Psoas muscle (tissue), 8 donors: ENCODE measurements at regions of chr17 and their contacts with region 1.

Region 1: DNA sequence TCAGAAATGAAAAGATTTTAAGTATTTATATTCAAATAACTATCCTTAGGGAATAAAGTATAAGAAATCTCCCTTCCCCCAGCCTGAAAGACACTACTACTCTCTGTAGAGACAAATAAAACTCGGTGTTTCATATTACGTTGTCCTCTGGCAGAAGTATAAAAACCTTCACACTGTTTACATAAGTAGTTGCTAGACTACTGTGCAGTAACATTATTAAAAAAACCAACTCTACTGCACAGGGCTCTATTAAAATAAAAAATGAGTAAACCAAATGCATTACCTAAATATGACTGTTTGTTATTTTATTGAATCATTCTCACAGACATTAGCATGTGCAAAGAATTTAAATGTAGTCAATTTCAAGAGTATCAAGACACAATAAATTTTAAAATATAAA is 67.4 kb downstream of the MED13 start:
- DNase-seq: no peak
- ATAC-seq: peak; percentile 80 to 92 (median 84)
- H3K4me3 ChIP-seq: peak overlapping the region; percentile 32
- H3K27ac ChIP-seq: peak overlapping the region; percentile 64
- H3K4me1 ChIP-seq: peaks cover 31% of the 10 kb centered on the region
- H3K27me3 ChIP-seq: no peaks in the 10 kb centered on the region
- CTCF ChIP-seq: no peak

Region 2: GRCh38 chr17:60947100-60947499 is 1050.6 kb before region 1 on chr17:
- intact Hi-C with region 1: no loop called
- DNase-seq: no peak
- ATAC-seq: no peak
- H3K4me3 ChIP-seq: no peak overlapping the region
- H3K27ac ChIP-seq: no peak overlapping the region
- H3K4me1 ChIP-seq: no peaks in the 10 kb centered on the region
- H3K27me3 ChIP-seq: no peaks in the 10 kb centered on the region
- CTCF ChIP-seq: no peak

Region 3: DNA sequence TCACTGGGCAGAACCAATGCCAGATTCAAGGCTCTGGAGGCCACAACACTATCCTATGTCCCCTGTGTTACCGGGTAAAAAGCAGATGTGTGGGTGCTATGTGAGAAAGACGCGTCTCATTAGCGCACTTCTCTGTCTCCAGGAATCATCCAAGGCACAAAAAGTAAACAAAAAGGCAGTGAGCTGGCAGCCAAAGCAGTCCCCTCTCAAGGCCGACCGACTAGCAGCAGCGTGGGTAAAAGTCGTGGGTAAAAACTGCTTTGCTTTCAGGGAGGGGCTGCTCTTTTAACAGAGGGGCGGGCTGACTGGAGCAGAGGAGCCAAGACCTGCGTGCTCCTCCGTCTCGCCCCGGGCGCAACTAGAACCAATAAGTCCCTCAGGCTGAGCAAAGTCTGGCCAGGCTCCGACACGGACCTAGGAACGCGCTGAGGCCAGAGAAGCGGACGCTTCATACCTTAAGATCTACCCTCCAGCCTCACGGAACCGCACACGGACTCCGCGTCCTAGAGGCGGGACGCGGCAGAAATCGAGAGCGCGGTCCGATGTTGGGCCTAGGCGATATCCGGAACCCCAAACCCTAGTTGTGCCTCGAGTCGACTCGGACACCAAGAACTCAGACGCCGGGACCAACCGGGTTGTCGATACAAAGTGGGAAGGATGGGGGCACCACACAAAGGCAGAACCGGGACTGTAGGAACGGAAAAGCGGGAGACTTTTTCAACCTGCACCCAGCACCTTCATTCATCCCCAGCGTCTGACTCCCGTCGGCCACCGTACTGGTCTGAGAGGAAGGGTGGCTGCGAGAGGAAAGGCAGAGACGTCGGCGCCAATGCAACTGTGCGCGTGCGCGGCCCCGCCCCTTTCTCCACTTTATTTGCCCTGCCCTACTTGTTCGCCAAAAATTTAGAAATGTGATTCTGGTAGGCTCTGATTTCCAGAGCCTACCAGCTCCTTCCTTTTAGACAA is 70.2 kb before region 1 on chr17 and contains the start of gene INTS2:
- intact Hi-C with region 1: no loop called
- DNase-seq: peak; percentile 98
- ATAC-seq: peak; percentile 96 to 98 (median 97)
- H3K4me3 ChIP-seq: peak within 1 kb of the TSS; percentile 89
- H3K27ac ChIP-seq: peak within 1 kb of the TSS; percentile 89
- H3K4me1 ChIP-seq: peaks cover 14% of the 10 kb centered on the region
- H3K27me3 ChIP-seq: no peaks in the 10 kb centered on the region
- CTCF ChIP-seq: no peak
- total RNA-seq, gene INTS2: 6.2 to 8.0 (median 6.9) TPM

Region 4: DNA sequence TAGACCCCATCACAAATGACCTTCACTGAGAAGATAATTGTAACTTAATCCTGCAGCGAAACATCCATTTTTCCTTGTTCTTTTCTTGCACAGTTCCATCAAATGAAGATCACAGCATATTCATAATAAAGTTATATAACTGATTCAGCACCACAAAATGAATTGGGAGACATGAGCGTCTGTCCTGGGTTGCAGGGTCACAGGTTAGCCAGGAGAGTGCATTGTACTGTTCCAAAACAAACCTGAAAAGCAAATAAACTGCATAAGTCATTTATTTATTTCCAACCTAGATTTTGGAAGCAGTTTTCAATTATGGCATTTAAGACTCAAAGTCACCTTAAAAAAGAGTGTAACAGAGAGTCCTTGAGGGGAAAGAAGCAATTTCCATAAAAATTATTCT is 51.3 kb before region 1 on chr17:
- intact Hi-C with region 1: loop called in 1 of 2 experiments (anchors 5 kb)
- DNase-seq: no peak
- ATAC-seq: no peak
- H3K4me3 ChIP-seq: no peak overlapping the region
- H3K27ac ChIP-seq: no peak overlapping the region
- H3K4me1 ChIP-seq: peaks cover 5% of the 10 kb centered on the region
- H3K27me3 ChIP-seq: no peaks in the 10 kb centered on the region
- CTCF ChIP-seq: no peak

Region 5: DNA sequence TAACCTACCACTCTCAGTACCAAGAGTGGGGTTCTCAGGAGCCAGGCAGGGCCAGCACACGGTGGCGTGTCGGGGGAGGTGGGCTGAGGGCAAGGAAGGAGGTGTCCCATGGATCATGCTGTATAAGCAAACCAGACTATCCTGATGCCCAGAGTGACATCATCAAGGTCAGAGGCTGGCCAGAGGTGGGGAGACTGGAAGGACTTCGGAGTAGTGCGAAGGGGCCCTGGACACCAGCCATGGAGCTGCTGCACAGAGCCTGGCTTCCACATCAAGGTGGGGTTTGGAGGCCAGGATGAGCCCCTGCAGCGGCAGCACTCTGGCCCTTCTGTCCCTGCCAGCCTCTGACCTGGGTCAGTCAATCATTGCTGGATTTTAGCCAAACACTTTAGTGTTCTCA is 32.5 kb after region 1 on chr17:
- intact Hi-C with region 1: loop called in 1 of 2 experiments (anchors 5 kb)
- DNase-seq: no peak
- ATAC-seq: peak in 1 of 4 donors; percentile 21
- H3K4me3 ChIP-seq: no peak overlapping the region
- H3K27ac ChIP-seq: no peak overlapping the region
- H3K4me1 ChIP-seq: peaks cover 21% of the 10 kb centered on the region
- H3K27me3 ChIP-seq: no peaks in the 10 kb centered on the region
- CTCF ChIP-seq: no peak

Region 6: GRCh38 chr17:62045109-62045905 is 47.6 kb after region 1 on chr17:
- intact Hi-C with region 1: loop called (anchors 5 to 10 kb)
- DNase-seq: no peak
- ATAC-seq: no peak
- H3K4me3 ChIP-seq: no peak overlapping the region
- H3K27ac ChIP-seq: peak overlapping the region; percentile 10
- H3K4me1 ChIP-seq: peaks cover 43% of the 10 kb centered on the region
- H3K27me3 ChIP-seq: no peaks in the 10 kb centered on the region
- CTCF ChIP-seq: no peak

Region 7: DNA sequence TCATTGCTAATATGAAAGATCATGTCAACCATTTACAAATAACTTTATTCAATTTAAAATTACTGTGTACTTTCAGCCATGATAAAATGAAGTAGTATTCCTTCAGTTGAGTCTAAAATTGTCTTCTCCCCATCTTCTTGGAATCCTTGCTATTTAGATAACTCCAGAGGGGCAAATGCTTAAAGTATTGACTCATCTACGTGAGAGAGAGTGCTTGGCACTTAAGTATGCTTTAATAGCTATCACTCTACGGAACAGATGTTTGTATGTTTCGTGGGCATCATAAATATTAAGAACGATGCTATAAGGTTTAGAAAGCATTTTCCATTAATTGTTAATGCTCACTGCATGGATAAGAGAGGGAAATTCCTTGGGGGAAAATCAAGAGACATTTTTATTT is 136.7 kb after region 1 on chr17:
- intact Hi-C with region 1: no loop called
- DNase-seq: no peak
- ATAC-seq: no peak
- H3K4me3 ChIP-seq: no peak overlapping the region
- H3K27ac ChIP-seq: no peak overlapping the region
- H3K4me1 ChIP-seq: no peaks in the 10 kb centered on the region
- H3K27me3 ChIP-seq: peaks cover 0 to 28% (median 6%) of the 10 kb centered on the region in 3 donors
- CTCF ChIP-seq: no peak